HEK293 (cell line): ENCODE measurements at regions of chr5 and their contacts with region 1.

Region 1: DNA sequence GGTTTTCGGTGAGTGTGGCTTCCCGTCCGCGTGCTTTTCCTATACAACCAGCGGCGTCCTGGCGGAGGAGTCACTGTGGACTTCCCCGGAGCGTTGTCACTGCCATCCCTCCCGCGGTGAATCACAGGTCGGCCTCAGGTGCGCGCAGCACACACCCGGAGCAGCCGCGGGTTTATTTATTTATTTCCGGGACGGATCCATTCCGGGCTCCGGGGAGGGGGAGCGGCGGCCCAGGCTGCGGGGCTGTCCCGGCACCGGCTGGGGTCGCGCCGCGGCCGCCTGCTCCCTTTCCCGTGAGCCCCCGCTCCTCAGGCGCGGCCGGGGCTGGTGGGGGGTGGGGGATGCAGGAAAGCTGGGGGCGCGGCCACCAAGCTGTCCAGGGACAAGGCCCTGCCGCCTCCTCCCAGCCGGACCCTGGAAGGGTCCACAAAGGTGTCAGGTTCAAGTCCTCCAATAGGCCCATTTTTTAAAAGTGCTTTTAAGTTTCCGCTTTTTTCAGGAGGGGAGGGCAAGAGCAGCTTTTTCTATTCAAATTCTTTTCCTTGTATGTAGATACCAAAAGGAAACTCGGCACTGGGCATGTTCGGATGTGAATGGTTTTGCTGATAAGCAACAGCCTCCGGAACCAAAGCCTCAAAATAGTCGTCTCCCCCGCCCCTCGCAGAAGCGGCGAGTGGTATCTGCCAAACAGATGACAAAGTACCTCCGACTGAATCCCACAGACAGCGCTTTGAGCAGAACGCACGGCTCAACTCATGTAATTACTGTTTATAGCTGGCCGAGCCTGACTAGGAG is 192.5 kb downstream of the CD180 start:
- H3K4me3 ChIP-seq: peak overlapping the region; percentile 56
- H3K27ac ChIP-seq: peak overlapping the region; percentile 73
- H3K4me1 ChIP-seq: no peaks in the 10 kb centered on the region
- CTCF ChIP-seq: no peak

Region 2: GRCh38 chr5:66882592-66883227 is 121.4 kb before region 1 on chr5:
- CTCF ChIA-PET with region 1: no interaction called
- POLR2A ChIA-PET with region 1: no interaction called
- H3K4me3 ChIP-seq: no peak overlapping the region
- H3K27ac ChIP-seq: no peak overlapping the region
- H3K4me1 ChIP-seq: peaks cover 13% of the 10 kb centered on the region
- CTCF ChIP-seq: no peak

Region 3: DNA sequence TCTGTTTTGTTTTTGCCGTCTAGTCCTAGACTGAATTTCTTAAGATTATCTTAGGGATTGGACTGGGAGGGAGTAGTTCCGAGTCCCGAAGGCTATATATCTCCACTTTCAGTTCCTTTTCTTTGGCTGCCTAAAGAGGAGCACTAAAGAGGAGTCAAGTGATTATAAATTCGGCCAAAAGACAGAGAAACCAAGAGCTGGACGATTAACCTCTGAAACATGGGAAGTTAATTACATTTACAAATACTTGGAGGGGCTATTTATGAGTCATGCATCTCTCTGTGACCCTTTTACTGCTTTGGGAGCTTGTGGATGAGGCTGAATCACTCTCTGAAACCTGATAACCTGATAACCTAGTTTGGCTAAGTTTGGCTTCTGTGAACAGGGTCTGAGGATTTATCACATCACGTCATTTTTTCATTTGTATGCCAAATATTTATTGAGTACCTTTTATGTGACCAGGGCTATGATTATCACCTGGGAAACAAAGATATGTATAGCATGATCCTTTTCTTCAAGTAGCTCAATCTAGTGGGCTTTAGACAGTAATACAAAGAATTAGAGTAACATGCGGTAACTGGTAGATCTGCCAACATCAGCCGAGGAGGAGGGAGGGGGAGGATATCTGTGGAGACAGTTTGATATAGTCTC is 11.5 kb after region 1 on chr5:
- CTCF ChIA-PET with region 1: no interaction called
- POLR2A ChIA-PET with region 1: interaction called, 14 read pairs
- H3K4me3 ChIP-seq: peak overlapping the region; percentile 17
- H3K27ac ChIP-seq: peak overlapping the region; percentile 43
- H3K4me1 ChIP-seq: peaks cover 33% of the 10 kb centered on the region
- CTCF ChIP-seq: no peak